Activated T-helper 1 cell treated with anti-CD3 and anti-CD28 coated beads, Interleukin-12 subunit alpha, Interleukin-12 subunit beta, Interleukin-2, Interleukin-4 antibody, amounts not matched to agents 30 ng/mL and 10 ng/mL and 1 ng/mL, durations not matched to agents 14 hours and 24 hours and 36 hours (primary cell): ENCODE measurements at regions of chr14 and their contacts with region 1.

Region 1: DNA sequence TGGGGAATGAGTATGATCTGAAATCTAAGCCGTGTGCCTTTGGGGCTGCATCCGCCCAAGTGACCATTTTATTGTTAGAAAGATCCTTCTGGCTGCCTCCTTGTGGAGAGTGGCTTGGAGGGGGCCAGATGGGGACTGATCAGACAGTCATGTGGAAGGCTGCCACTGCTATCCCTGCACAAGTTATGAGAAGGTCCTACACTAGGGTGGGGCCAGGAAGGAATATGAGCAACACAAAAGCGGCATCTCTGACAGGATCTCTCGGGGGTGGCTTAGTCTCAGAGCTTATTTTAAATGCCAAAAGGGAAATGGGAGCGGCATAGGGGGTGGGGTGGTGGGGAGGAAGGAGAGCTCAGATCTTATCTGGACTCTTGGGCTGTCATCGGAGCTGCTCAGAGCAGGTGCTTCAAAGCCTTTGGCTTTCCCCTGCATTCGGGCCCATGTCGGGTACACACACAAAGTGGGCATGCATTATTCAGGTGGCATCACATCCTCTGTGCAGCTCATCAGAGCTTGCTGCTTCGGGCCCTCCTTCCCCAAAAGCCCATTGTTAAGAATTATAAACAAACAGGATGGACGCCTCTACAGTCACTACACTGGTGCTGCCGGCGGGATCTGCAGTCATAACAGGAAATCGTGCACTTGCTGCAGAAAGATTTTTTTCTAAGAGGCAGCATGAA is 805.4 kb downstream of the VRK1 start:
- DNase-seq: peak; percentile 64
- H3K4me3 Mint-ChIP-seq: no peak overlapping the region
- H3K27ac Mint-ChIP-seq: no peak overlapping the region
- H3K4me1 Mint-ChIP-seq: peaks cover 25% of the 10 kb centered on the region
- H3K27me3 Mint-ChIP-seq: no peaks in the 10 kb centered on the region

Region 2: GRCh38 chr14:97620066-97620465 is 17.5 kb after region 1 on chr14:
- intact Hi-C with region 1: loop called (anchors 1 kb)
- DNase-seq: no peak
- H3K4me3 Mint-ChIP-seq: peak overlapping the region; percentile 79
- H3K27ac Mint-ChIP-seq: peak overlapping the region; percentile 56
- H3K4me1 Mint-ChIP-seq: peaks cover 47% of the 10 kb centered on the region
- H3K27me3 Mint-ChIP-seq: peaks cover 4% of the 10 kb centered on the region

Region 3: GRCh38 chr14:97707603-97708002 is 105.0 kb after region 1 on chr14:
- intact Hi-C with region 1: loop called (anchors 2 kb)
- DNase-seq: no peak
- H3K4me3 Mint-ChIP-seq: peak overlapping the region; percentile 9
- H3K27ac Mint-ChIP-seq: no peak overlapping the region
- H3K4me1 Mint-ChIP-seq: peaks cover 79% of the 10 kb centered on the region
- H3K27me3 Mint-ChIP-seq: no peaks in the 10 kb centered on the region